AG04450 (cell line): ENCODE measurements at regions of chr22 and their contacts with region 1.

Region 1: DNA sequence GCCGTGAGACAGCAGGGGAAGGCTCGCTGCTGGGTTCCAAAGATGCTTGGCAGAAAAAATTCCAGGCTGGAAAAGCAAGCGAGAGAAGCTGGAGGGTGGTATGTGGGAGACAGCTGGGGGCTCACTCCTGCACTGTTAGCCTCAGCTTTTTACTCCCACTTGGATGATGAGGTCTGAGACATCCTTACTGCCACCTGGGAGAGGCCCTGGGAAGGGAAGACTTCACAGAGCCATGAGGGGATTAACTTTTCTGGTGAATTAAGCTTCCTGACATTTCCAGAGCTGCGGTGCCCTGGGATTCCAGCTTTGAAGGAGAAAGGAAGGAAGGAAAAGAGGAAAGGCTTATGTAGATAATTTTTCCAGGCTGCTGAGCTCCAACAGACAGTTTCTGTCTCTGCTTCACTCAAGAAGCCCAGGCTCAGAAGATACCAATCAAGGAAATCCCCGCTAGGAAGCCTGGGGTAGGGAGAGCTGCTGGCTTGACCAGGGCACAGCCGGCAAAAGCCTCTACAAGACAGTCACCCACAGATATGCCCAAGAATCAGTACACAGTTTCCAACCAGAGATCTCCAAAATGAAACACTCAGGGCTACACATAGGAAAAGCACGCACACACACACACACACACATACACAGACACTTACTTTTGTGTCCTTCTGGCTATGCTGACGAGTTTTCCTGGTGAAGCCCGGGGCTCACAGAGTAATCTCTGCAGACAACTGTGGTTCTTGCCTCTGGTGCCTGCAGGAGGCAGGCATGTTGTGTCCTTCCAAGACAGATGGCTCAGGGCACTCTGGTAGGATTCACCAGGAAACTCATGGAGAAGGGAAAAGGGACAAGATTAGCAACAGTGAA is 907 bp downstream of the MCHR1 start:
- DNase-seq: no peak
- H3K4me3 ChIP-seq: peak overlapping the region; percentile 55
- H3K27ac ChIP-seq: peak overlapping the region; percentile 39
- H3K27me3 ChIP-seq: no peaks in the 10 kb centered on the region
- CTCF ChIP-seq: peak; percentile 31

Region 2: GRCh38 chr22:40666151-40666848 is 13.9 kb before region 1 on chr22:
- CTCF ChIA-PET with region 1: no interaction called
- POLR2A ChIA-PET with region 1: no interaction called
- DNase-seq: no peak
- H3K4me3 ChIP-seq: no peak overlapping the region
- H3K27ac ChIP-seq: peak overlapping the region; percentile 48
- H3K27me3 ChIP-seq: no peaks in the 10 kb centered on the region
- CTCF ChIP-seq: no peak

Region 3: DNA sequence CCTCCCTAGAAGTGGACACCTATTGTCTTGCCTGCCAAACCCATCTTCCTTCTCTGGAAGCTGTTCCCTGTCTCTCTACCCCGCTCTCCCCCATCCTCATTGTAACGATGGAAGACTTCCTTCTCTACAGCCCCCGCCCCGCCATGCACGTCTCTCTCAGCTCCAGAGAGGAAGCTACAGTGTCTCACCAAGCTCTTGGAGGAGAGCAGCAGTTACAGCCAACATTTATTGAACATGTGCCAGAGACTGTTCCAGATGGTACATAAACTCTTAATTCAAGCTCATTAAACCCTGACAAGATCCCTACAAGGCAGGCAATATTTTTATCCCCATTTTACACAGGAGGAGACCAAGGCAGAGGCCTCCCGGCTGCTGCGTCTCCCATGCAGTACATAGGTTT is 14.2 kb after region 1 on chr22:
- CTCF ChIA-PET with region 1: interaction called, 13 read pairs
- POLR2A ChIA-PET with region 1: no interaction called
- DNase-seq: no peak
- H3K4me3 ChIP-seq: no peak overlapping the region
- H3K27ac ChIP-seq: no peak overlapping the region
- H3K27me3 ChIP-seq: peaks cover 9% of the 10 kb centered on the region
- CTCF ChIP-seq: no peak

Region 4: DNA sequence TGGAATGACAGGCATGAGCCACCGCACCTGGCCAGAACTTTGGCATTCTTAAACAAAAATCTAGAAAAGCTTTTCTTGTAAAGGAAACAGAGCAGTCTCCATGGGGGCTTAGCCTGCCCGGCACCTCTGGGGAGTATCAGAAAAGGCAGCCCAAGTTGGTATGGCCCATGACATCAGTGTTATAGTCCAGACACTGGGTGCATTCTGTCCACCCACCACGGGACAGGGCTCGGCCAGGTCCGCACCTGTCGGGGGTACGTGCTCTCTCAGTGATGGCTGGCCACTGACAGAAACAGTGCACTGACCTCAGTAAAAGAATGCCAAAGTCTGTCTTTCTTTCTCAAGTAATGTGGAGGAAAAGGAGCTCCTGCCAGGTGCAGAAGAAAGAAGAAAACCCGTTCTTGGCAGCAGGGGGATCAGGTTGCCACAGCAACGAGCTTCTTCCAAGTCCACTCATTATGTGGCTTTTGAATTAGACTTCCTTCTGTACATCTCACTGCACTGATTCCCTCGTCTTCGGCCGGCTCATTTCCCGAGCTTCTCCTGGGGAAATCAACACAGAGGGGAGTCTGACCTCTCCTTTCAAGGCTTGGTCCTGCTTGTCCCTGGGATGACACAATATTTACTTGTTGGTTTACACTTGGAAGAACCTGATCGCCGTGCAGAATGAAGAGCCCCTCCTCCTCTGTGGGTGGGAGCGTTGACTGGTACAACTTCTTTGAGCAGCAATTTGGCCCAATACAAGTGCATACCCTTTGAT is 34.2 kb after region 1 on chr22:
- CTCF ChIA-PET with region 1: interaction called, 19 read pairs
- POLR2A ChIA-PET with region 1: interaction called, 8 read pairs
- DNase-seq: peak; percentile 34
- H3K4me3 ChIP-seq: 0 out of 2 replicates have a peak overlapping the region, but pooled peaks have one; percentile 3
- H3K27ac ChIP-seq: no peak overlapping the region
- H3K27me3 ChIP-seq: peaks cover 2% of the 10 kb centered on the region
- CTCF ChIP-seq: no peak

Region 5: DNA sequence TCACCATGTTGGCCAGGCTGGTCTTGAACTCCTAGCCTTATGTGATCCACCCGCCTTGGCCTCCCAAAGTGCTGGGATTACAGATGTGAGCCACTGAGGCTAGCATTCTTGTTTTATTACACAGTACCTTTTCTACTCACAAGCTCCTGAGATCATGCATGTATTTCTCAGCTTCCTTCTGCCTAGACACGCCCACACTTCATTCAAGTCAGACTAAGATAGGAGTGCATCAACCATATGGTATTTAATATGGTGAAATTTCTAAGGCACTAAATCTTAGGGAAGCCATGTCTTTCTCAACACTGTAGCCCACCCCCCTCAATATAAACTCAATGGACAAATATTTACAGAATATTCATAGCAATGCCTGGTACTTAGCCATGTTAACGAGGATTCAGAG is 76.9 kb after region 1 on chr22:
- CTCF ChIA-PET with region 1: interaction called, 49 read pairs
- POLR2A ChIA-PET with region 1: interaction called, 3 read pairs
- DNase-seq: no peak
- H3K4me3 ChIP-seq: no peak overlapping the region
- H3K27ac ChIP-seq: no peak overlapping the region
- H3K27me3 ChIP-seq: no peaks in the 10 kb centered on the region
- CTCF ChIP-seq: no peak

Region 6: GRCh38 chr22:40826984-40827741 is 147.0 kb after region 1 on chr22:
- CTCF ChIA-PET with region 1: interaction called, 12 read pairs
- POLR2A ChIA-PET with region 1: no interaction called
- DNase-seq: no peak
- H3K4me3 ChIP-seq: no peak overlapping the region
- H3K27ac ChIP-seq: no peak overlapping the region
- H3K27me3 ChIP-seq: no peaks in the 10 kb centered on the region
- CTCF ChIP-seq: no peak

Region 7: DNA sequence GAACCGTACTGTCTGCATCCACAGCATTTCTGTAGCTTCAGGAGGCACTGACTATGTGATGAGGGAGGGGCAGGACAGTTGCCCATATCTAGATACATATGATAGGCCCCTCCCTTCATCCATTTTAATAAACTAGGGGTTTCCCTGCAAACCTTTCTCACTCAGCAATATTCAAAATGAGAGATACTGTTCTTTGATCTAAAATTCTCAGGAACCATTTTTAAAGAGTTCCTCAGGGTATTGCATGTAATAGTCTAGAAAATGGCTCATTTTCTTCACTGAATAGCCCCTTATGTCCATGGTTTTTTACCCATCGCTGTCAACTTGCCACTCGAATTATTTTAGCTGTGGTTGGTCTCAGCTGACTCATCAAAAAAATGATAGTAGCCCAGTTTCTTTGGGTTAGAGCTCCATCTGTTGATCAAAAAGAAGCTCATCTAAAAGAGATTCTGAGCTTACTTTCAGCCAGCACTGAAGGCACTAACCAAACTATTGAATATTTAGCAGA is 218.7 kb after region 1 on chr22:
- CTCF ChIA-PET with region 1: interaction called, 25 read pairs
- POLR2A ChIA-PET with region 1: no interaction called
- DNase-seq: peak; percentile 27
- H3K4me3 ChIP-seq: no peak overlapping the region
- H3K27ac ChIP-seq: no peak overlapping the region
- H3K27me3 ChIP-seq: no peaks in the 10 kb centered on the region
- CTCF ChIP-seq: peak; percentile 67

Region 8: DNA sequence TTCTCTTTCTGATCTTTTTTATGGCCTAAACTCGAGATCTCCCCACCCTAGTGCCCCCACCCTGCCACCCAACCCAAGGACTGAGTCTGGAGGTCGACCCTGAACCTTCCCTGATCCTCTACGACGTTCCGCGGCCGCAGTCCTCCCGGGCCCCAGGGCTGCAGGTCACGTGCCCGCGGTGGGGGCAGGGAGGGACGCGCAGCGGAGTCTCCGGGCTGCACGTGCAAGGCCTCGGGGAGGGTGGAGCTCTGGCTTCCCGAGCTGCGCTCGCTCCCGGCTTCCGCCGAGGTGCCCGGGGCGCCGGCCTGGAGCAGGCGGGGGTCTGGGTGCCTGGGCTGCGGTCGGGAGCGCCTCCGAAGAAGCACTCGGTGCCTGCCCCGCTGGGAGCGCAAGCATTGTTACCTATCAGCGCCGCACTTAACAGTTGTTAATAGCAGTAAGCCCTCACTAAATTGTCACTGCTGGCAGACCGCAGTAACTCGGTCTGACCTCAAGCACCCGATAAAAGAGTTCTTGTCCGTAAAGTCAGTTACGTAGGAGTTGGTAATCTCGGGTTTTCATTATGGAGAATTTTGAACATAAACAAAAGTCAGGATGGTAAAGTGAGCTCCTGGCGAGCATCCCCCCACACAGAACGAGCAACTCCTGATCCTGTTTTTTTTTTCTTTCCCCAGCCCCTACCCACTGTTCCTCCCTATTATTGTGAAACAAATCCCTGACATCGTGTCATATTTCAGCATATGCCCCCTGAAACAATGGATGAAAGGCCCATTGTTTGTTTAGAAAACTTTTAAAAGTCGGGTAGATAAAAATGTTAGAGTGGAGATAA is 342.5 kb after region 1 on chr22:
- CTCF ChIA-PET with region 1: no interaction called
- POLR2A ChIA-PET with region 1: no interaction called
- DNase-seq: peak; percentile 56
- H3K4me3 ChIP-seq: peak overlapping the region; percentile 65
- H3K27ac ChIP-seq: peak overlapping the region; percentile 65
- H3K27me3 ChIP-seq: no peaks in the 10 kb centered on the region
- CTCF ChIP-seq: no peak